ENCODE measurements at regions of chr1 and their contacts with region 1.

Region 1: GRCh38 chr1:52404116-52404986 is at the starts of genes ORC1 and PRPF38A:
- DNase-seq: peak; percentile 99
- H3K4me3 ChIP-seq: peak within 1 kb of the TSS; percentile 72 to 91 (median 83)
- H3K27ac ChIP-seq: peak within 1 kb of the TSS; percentile 86 to 91 (median 90)
- H3K4me1 ChIP-seq: peaks cover 16 to 30% (median 25%) of the 10 kb centered on the region in 4 donors
- H3K27me3 ChIP-seq: no peaks in the 10 kb centered on the region
- CTCF ChIP-seq: peak; percentile 22 to 49 (median 42)
- EP300 ChIP-seq: no peak
- POLR2A ChIP-seq: no peak
- total RNA-seq, gene ORC1: 0.17 to 1.2 (median 0.33) TPM
- total RNA-seq, gene PRPF38A: 10.9 to 21.7 (median 13.7) TPM

Region 2: GRCh38 chr1:52365746-52366516 is 38.4 kb before region 1 on chr1 and contains the start of gene CC2D1B:
- intact Hi-C with region 1: loop called (anchors 2 kb)
- DNase-seq: peak; percentile 99
- H3K4me3 ChIP-seq: peak within 1 kb of the TSS; percentile 71 to 96 (median 85)
- H3K27ac ChIP-seq: peak within 1 kb of the TSS; percentile 87 to 95 (median 93)
- H3K4me1 ChIP-seq: peaks cover 11 to 38% (median 26%) of the 10 kb centered on the region in 4 donors
- H3K27me3 ChIP-seq: no peaks in the 10 kb centered on the region
- CTCF ChIP-seq: peak; percentile 16 to 28 (median 27)
- EP300 ChIP-seq: no peak
- POLR2A ChIP-seq: peak; percentile 93
- total RNA-seq, gene CC2D1B: 19.5 to 30.3 (median 25.1) TPM

Region 3: GRCh38 chr1:52683367-52683940 is 279.1 kb after region 1 on chr1:
- intact Hi-C with region 1: loop called (anchors 10 kb)
- DNase-seq: no peak
- H3K4me3 ChIP-seq: no peak overlapping the region
- H3K27ac ChIP-seq: no peak overlapping the region
- H3K4me1 ChIP-seq: peaks cover 0 to 4% (median 2%) of the 10 kb centered on the region in 4 donors
- H3K27me3 ChIP-seq: no peaks in the 10 kb centered on the region
- CTCF ChIP-seq: no peak
- EP300 ChIP-seq: no peak
- POLR2A ChIP-seq: no peak